ENCODE measurements at regions of chr15 and their contacts with region 1.

Region 1: DNA sequence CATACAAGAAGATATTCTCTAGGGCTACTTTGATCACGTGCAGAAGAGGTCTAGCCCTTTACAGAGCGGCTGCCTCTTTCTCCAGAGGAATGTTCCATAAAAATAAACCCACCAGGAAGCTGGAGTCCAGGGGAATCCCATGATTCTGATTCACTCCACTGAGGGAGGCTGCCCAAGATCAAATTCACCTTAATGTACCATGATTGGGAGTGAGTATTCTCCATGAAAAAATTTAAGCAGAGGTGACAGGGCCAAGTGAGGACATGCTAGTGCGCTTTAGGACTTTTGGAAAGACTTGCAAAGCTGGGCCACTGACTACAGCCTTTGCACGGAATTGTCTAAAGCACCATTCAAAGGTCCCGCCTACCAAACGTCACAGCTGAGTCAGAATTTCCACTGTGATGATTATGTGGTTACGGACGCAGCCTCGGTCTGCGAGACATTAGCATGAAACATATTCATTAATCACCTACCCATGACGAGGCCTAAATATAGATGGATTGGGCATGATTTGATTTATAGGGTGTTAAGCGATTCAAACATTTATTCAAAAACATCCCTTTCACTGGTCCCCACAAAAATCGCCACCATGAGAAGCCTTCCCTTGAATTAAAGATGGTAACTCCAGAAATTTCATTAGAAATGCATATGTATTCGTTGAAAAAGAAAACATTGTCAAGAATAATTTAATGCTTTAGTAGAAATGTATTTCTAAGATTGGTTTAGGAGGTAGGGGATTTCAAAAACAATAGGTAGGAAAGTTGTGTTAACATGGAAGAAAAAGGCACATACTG is 152.6 kb downstream of the GREM1 start:
- DNase-seq: no peak
- H3K4me3 ChIP-seq: no peak overlapping the region
- H3K4me3 Mint-ChIP-seq: no peak overlapping the region
- H3K27ac ChIP-seq: no peak overlapping the region
- H3K27ac Mint-ChIP-seq: no peak overlapping the region
- H3K4me1 ChIP-seq: peaks cover 15 to 19% of the 10 kb centered on the region in 2 donors
- H3K4me1 Mint-ChIP-seq: peaks cover 24% of the 10 kb centered on the region
- H3K27me3 ChIP-seq: no peaks in the 10 kb centered on the region
- H3K27me3 Mint-ChIP-seq: peaks cover 0 to 1% (median 0%) of the 10 kb centered on the region in 3 donors
- CTCF ChIP-seq: no peak

Region 2: DNA sequence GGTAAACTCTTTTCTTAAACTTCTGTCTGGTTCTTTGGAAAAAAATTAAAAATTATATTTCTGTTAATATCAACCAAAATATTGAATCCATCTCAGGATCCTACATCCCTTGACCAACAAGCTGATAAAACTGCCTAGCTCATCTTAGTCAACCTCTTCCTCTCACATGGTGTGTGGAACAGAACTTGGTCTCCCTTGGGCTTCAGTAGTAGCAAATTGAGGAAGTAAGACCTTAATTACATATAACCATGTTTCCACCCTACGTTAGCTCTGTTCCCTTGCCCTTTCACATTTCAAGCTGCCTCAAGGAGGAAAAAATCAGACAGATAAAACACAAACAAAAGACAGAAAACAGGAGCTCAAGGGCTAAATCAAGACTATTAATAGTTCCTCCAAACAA is 36.3 kb before region 1 on chr15:
- intact Hi-C with region 1: no loop called
- DNase-seq: peak; percentile 20 to 32 (median 23)
- H3K4me3 ChIP-seq: no peak overlapping the region
- H3K4me3 Mint-ChIP-seq: no peak overlapping the region
- H3K27ac ChIP-seq: no peak overlapping the region
- H3K27ac Mint-ChIP-seq: peak overlapping the region in 1 of 7 donors; percentile 40
- H3K4me1 ChIP-seq: peaks cover 0 to 7% of the 10 kb centered on the region in 2 donors
- H3K4me1 Mint-ChIP-seq: peaks cover 4% of the 10 kb centered on the region
- H3K27me3 ChIP-seq: no peaks in the 10 kb centered on the region
- H3K27me3 Mint-ChIP-seq: peaks cover 3 to 8% (median 3%) of the 10 kb centered on the region in 3 donors
- CTCF ChIP-seq: no peak

Region 3: GRCh38 chr15:32908135-32908801 is 37.8 kb after region 1 on chr15:
- intact Hi-C with region 1: loop called in 1 of 2 experiments (anchors 5 kb)
- DNase-seq: peak; percentile 64 to 78 (median 68)
- H3K4me3 ChIP-seq: peak overlapping the region; percentile 22 to 68 (median 56)
- H3K4me3 Mint-ChIP-seq: peak overlapping the region; percentile 43 to 78
- H3K27ac ChIP-seq: peak overlapping the region; percentile 52 to 85
- H3K27ac Mint-ChIP-seq: peak overlapping the region; percentile 57 to 93 (median 89)
- H3K4me1 ChIP-seq: peaks cover 36 to 37% of the 10 kb centered on the region in 2 donors
- H3K4me1 Mint-ChIP-seq: peaks cover 40% of the 10 kb centered on the region
- H3K27me3 ChIP-seq: no peaks in the 10 kb centered on the region
- H3K27me3 Mint-ChIP-seq: peaks cover 0 to 3% (median 0%) of the 10 kb centered on the region in 3 donors
- CTCF ChIP-seq: no peak